GM12878 (cell line): ENCODE measurements at regions of chr2 and their contacts with region 1.

Region 1: GRCh38 chr2:131673392-131674173 is 145.9 kb downstream of the CCDC74A start:
- DNase-seq: no peak
- ATAC-seq: peak; percentile 97
- H3K4me3 ChIP-seq: peak overlapping the region; percentile 42; the same call in 1 of the 2 replicates
- H3K27ac ChIP-seq: no peak overlapping the region
- H3K4me1 ChIP-seq: peaks cover 19% of the 10 kb centered on the region
- H3K27me3 ChIP-seq: no peaks in the 10 kb centered on the region
- CTCF ChIP-seq: peak; percentile 77 to 88 (median 80)
- EP300 ChIP-seq: no peak
- POLR2A ChIP-seq: no peak
- RAD21 ChIP-seq: peak; percentile 77

Region 2: GRCh38 chr2:130150181-130151144 is 1523.1 kb before region 1 on chr2:
- CTCF ChIA-PET with region 1: no interaction called
- POLR2A ChIA-PET with region 1: no interaction called
- RAD21 ChIA-PET with region 1: no interaction called
- SMC1A ChIA-PET with region 1: no interaction called
- in situ Hi-C with region 1: loop called (anchors 10 kb)
- intact Hi-C with region 1: no loop called
- DNase-seq: no peak
- ATAC-seq: no peak
- H3K4me3 ChIP-seq: no peak overlapping the region
- H3K27ac ChIP-seq: no peak overlapping the region
- H3K4me1 ChIP-seq: no peaks in the 10 kb centered on the region
- H3K27me3 ChIP-seq: no peaks in the 10 kb centered on the region
- CTCF ChIP-seq: no peak
- EP300 ChIP-seq: no peak
- POLR2A ChIP-seq: no peak
- RAD21 ChIP-seq: no peak

Region 3: GRCh38 chr2:131154071-131154531 is 519.5 kb before region 1 on chr2:
- CTCF ChIA-PET with region 1: interaction called, 4 read pairs
- POLR2A ChIA-PET with region 1: no interaction called
- RAD21 ChIA-PET with region 1: interaction called, 9 read pairs
- SMC1A ChIA-PET with region 1: no interaction called
- in situ Hi-C with region 1: no loop called
- intact Hi-C with region 1: loop called (anchors 10 kb)
- DNase-seq: peak; percentile 24
- ATAC-seq: peak; percentile 95
- H3K4me3 ChIP-seq: no peak overlapping the region
- H3K27ac ChIP-seq: no peak overlapping the region
- H3K4me1 ChIP-seq: peaks cover 10% of the 10 kb centered on the region
- H3K27me3 ChIP-seq: no peaks in the 10 kb centered on the region
- CTCF ChIP-seq: peak; percentile 90 to 97 (median 90); a peak in 5 of 6 replicates
- EP300 ChIP-seq: no peak
- POLR2A ChIP-seq: no peak
- RAD21 ChIP-seq: peak; percentile 87

Region 4: GRCh38 chr2:131492418-131493198 is 181.0 kb before region 1 on chr2:
- CTCF ChIA-PET with region 1: interaction called, 13 read pairs
- POLR2A ChIA-PET with region 1: no interaction called
- RAD21 ChIA-PET with region 1: interaction called, 3 read pairs
- SMC1A ChIA-PET with region 1: no interaction called
- in situ Hi-C with region 1: no loop called
- intact Hi-C with region 1: loop called (anchors 5 kb)
- DNase-seq: peak; percentile 93
- ATAC-seq: peak; percentile 84
- H3K4me3 ChIP-seq: peak overlapping the region; percentile 90
- H3K27ac ChIP-seq: peak overlapping the region; percentile 86
- H3K4me1 ChIP-seq: peaks cover 9% of the 10 kb centered on the region
- H3K27me3 ChIP-seq: no peaks in the 10 kb centered on the region
- CTCF ChIP-seq: peak; percentile 61 to 80 (median 77)
- EP300 ChIP-seq: no peak
- POLR2A ChIP-seq: peak; percentile 78
- RAD21 ChIP-seq: peak; percentile 48

Region 5: GRCh38 chr2:131801210-131801744 is 127.7 kb after region 1 on chr2:
- CTCF ChIA-PET with region 1: interaction called, 35 read pairs
- POLR2A ChIA-PET with region 1: interaction called, 5 read pairs
- RAD21 ChIA-PET with region 1: interaction called, 14 read pairs
- SMC1A ChIA-PET with region 1: interaction called, 9 read pairs
- in situ Hi-C with region 1: loop called (anchors 10 kb)
- intact Hi-C with region 1: loop called (anchors 2 kb)
- DNase-seq: no peak
- ATAC-seq: no peak
- H3K4me3 ChIP-seq: no peak overlapping the region
- H3K27ac ChIP-seq: no peak overlapping the region
- H3K4me1 ChIP-seq: no peaks in the 10 kb centered on the region
- H3K27me3 ChIP-seq: no peaks in the 10 kb centered on the region; a peak in 1 of 4 replicates
- CTCF ChIP-seq: no peak
- EP300 ChIP-seq: no peak
- POLR2A ChIP-seq: no peak
- RAD21 ChIP-seq: no peak